ENCODE measurements at regions of chr17 and their contacts with region 1.

Region 1: GRCh38 chr17:21304091-21304490 is 19.6 kb downstream of the MAP2K3 start:
- DNase-seq: peak; percentile 6
- H3K4me3 ChIP-seq: no peak overlapping the region
- H3K27ac ChIP-seq: no peak overlapping the region
- H3K4me1 ChIP-seq: no peaks in the 10 kb centered on the region
- H3K27me3 ChIP-seq: no peaks in the 10 kb centered on the region
- CTCF ChIP-seq: no peak
- EP300 ChIP-seq: no peak
- POLR2A ChIP-seq: no peak

Region 2: DNA sequence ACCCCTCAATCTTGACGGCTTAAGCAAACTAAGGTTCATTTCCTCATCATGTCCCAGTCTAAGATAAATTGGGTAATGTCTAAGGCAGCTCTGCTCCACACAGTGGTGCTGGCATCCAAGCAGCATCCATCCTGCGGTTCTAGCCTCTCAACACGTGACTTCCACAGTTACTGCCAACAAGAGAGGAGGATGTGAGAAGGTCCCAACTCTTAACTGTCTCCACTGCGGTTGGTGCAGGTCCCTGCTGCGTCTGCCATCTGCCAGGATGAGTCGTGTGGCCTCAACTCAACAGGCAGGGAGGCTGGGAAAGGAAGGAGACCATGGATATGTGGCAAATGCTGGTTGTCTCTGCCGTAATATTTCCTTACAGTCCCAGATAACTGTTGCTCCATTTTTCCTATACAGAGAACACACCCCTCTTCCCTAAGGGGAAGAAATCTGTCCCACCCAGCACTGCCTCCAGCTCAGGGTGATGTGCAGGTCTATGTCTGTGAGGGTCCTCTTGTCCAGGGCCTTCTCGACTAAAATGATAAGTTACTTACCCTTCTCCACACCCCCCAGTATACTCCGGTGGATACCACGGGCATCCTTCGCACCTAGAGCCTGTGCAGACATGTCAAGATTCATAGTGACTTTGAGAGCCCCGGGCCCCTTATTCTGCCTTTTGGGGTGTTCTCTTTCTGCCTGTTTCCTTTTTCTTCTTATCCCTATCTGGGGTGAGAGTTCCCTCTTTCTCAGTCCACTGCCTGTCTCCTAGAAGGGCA is 452.9 kb after region 1 on chr17:
- in situ Hi-C with region 1: loop called in 2 of 4 experiments (anchors 25 kb)
- intact Hi-C with region 1: no loop called
- DNase-seq: no peak
- H3K4me3 ChIP-seq: no peak overlapping the region
- H3K27ac ChIP-seq: no peak overlapping the region
- H3K4me1 ChIP-seq: no peaks in the 10 kb centered on the region
- H3K27me3 ChIP-seq: no peaks in the 10 kb centered on the region
- CTCF ChIP-seq: no peak
- EP300 ChIP-seq: no peak
- POLR2A ChIP-seq: no peak

Region 3: GRCh38 chr17:21772321-21772720 is 468.2 kb after region 1 on chr17:
- in situ Hi-C with region 1: loop called (anchors 25 kb)
- intact Hi-C with region 1: no loop called
- DNase-seq: no peak
- H3K4me3 ChIP-seq: no peak overlapping the region
- H3K27ac ChIP-seq: no peak overlapping the region
- H3K4me1 ChIP-seq: peaks cover 0 to 10% (median 2%) of the 10 kb centered on the region in 4 donors
- H3K27me3 ChIP-seq: no peaks in the 10 kb centered on the region
- CTCF ChIP-seq: no peak
- EP300 ChIP-seq: no peak
- POLR2A ChIP-seq: no peak